ENCODE measurements at regions of chr17 and their contacts with region 1.

Region 1: DNA sequence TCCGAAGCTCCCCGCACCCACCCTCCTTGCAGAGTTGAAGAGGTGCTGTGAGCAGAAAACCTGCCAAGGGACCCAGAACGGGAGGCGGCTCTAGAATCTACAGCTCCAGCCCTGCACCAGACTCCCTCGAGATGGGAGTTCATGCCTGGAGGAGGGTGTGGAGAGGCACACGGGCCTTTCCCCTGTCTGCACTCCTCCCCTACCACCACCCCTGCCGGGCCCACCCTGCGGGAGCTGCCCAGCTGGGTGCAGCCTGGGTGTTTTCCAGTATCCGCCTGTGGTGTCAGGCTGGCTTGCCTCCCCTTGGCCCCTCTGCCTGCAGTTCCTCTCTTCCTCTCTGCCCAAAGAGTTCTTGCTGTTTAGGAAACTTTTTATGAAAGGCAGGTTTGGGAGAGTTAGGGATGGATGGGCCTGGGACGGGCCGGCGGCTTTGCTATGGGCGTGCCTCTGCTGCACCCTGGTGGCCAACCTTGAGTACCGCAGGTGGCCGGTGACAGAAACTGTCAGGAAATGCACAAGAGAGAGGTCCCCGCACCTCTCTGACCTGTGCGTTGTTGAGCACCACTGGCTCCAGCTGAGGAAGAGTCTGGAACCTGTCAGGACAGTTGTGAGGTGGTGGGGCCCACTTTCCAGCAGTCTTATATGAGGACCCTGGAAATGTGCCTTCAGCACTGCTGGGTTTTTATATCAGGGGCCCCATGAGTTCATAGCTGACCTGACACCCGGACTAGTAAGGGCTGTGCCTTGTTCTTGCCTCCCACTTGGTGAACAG is 354.1 kb downstream of the SEC14L1 start:
- DNase-seq: peak; percentile 77 to 88
- ATAC-seq: peak; percentile 85 to 96 (median 90)
- H3K4me3 ChIP-seq: no peak overlapping the region
- H3K4me3 Mint-ChIP-seq: peak overlapping the region; percentile 37
- H3K27ac ChIP-seq: no peak overlapping the region
- H3K27ac Mint-ChIP-seq: peak overlapping the region; percentile 41 to 80
- H3K4me1 ChIP-seq: peaks cover 43% of the 10 kb centered on the region
- H3K4me1 Mint-ChIP-seq: peaks cover 7 to 21% of the 10 kb centered on the region in 2 donors
- H3K27me3 ChIP-seq: no peaks in the 10 kb centered on the region
- H3K27me3 Mint-ChIP-seq: no peaks in the 10 kb centered on the region
- CTCF ChIP-seq: peak; percentile 99

Region 2: GRCh38 chr17:77088455-77089123 is 406.3 kb before region 1 on chr17:
- intact Hi-C with region 1: loop called (anchors 10 kb)
- DNase-seq: peak; percentile 85 to 94
- ATAC-seq: peak; percentile 90 to 96 (median 95)
- H3K4me3 ChIP-seq: peak overlapping the region; percentile 83
- H3K4me3 Mint-ChIP-seq: peak overlapping the region; percentile 91
- H3K27ac ChIP-seq: peak overlapping the region; percentile 88
- H3K27ac Mint-ChIP-seq: peak overlapping the region; percentile 96 to 99
- H3K4me1 ChIP-seq: peaks cover 38% of the 10 kb centered on the region
- H3K4me1 Mint-ChIP-seq: peaks cover 32 to 38% of the 10 kb centered on the region in 2 donors
- H3K27me3 ChIP-seq: no peaks in the 10 kb centered on the region
- H3K27me3 Mint-ChIP-seq: peaks cover 0 to 8% of the 10 kb centered on the region in 2 donors
- CTCF ChIP-seq: peak; percentile 75

Region 3: DNA sequence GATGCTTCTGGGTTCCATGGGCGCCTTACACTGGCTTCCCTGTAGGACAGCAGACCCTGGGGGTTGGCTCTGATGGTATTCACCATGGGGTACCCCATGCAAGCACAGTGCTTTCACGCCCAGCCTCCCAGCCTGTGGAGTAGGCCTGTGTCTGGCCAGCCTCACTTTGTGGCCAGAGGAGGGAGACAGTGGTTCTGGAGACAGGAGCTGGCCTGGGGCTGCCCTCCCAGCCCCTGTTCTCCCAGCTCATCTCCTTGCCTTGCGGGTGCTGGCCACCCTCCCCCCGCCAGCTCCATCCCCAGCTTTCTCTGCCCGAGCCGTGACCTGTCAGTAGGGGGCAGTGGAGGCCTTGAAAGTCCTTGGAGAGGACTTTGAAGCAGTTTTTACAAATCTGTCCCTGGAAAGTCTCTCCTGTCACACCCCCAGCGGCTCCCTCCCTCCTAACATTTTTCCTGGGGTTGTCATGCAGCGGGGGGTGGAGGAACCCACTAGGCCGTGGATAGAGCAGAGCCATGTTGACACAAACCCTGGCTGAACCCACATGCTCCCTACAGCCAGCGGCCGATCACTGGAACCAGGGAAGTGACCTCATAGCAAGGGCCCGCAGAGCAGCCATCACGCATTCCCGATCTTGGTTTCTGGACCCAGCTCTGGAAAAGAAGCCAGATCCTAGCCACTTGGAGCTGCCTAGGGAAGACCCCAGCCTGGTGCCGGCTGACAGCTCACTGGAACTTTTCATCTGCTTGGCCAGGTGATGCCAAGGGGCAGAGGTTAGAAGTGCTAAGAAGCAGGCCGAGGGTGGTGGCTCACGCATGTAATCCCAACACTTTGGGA is 64.7 kb before region 1 on chr17:
- intact Hi-C with region 1: loop called (anchors 1 kb)
- DNase-seq: peak; percentile 75 to 91
- ATAC-seq: peak; percentile 59 to 77 (median 62)
- H3K4me3 ChIP-seq: no peak overlapping the region
- H3K4me3 Mint-ChIP-seq: no peak overlapping the region
- H3K27ac ChIP-seq: peak overlapping the region; percentile 44
- H3K27ac Mint-ChIP-seq: peak overlapping the region in 1 of 2 donors; percentile 48
- H3K4me1 ChIP-seq: peaks cover 100% of the 10 kb centered on the region
- H3K4me1 Mint-ChIP-seq: peaks cover 56 to 82% of the 10 kb centered on the region in 2 donors
- H3K27me3 ChIP-seq: no peaks in the 10 kb centered on the region
- H3K27me3 Mint-ChIP-seq: no peaks in the 10 kb centered on the region
- CTCF ChIP-seq: peak; percentile 79

Region 4: DNA sequence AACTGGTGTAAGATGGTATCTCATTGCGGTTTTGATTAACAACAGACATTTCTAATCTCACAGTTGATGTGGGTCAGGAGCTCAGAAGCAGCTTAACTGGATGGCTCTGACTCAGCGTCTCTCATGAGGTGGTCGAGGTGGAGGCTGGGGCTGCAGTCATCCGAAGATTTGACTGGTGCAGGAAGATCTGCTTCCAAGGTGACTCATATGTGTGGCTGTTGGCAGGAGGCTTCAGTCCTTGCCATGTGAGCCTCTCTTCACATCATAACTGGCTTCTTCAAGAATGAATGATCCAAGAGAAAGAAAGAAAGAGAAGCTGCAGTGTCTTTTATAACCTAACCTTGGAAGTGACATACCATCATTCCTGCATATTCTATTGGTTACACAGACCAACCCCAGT is 22.1 kb after region 1 on chr17:
- intact Hi-C with region 1: no loop called
- DNase-seq: peak in 1 of 2 donors; percentile 27
- ATAC-seq: peak in 2 of 3 donors; percentile 29 to 30
- H3K4me3 ChIP-seq: no peak overlapping the region
- H3K4me3 Mint-ChIP-seq: no peak overlapping the region
- H3K27ac ChIP-seq: no peak overlapping the region
- H3K27ac Mint-ChIP-seq: no peak overlapping the region
- H3K4me1 ChIP-seq: no peaks in the 10 kb centered on the region
- H3K4me1 Mint-ChIP-seq: no peaks in the 10 kb centered on the region
- H3K27me3 ChIP-seq: no peaks in the 10 kb centered on the region
- H3K27me3 Mint-ChIP-seq: no peaks in the 10 kb centered on the region
- CTCF ChIP-seq: no peak

Measured in natural killer cell (primary cell).